ENCODE measurements at regions of chr12 and their contacts with region 1.

Region 1: GRCh38 chr12:51823875-51824565 is 24.5 kb downstream of the FIGNL2 start:
- DNase-seq: no peak
- ATAC-seq: peak; percentile 72
- H3K4me3 ChIP-seq: no peak overlapping the region
- H3K27ac ChIP-seq: no peak overlapping the region
- H3K4me1 ChIP-seq: no peaks in the 10 kb centered on the region
- H3K27me3 ChIP-seq: no peaks in the 10 kb centered on the region
- CTCF ChIP-seq: peak; percentile 86

Region 2: GRCh38 chr12:51424662-51425438 is 399.2 kb before region 1 on chr12 and contains the start of gene SLC4A8:
- CTCF ChIA-PET with region 1: interaction called, 9 read pairs
- POLR2A ChIA-PET with region 1: no interaction called
- in situ Hi-C with region 1: no loop called
- intact Hi-C with region 1: loop called (anchors 2 kb)
- DNase-seq: no peak
- ATAC-seq: peak; percentile 98
- H3K4me3 ChIP-seq: peak within 1 kb of the TSS; percentile 60 to 70
- H3K27ac ChIP-seq: peak within 1 kb of the TSS; percentile 80
- H3K4me1 ChIP-seq: peaks cover 6% of the 10 kb centered on the region; the same call in 1 of the 2 replicates
- H3K27me3 ChIP-seq: no peaks in the 10 kb centered on the region
- CTCF ChIP-seq: peak; percentile 92
- total RNA-seq, gene SLC4A8: 18.8 TPM

Region 3: GRCh38 chr12:51531978-51532497 is 292.0 kb before region 1 on chr12:
- CTCF ChIA-PET with region 1: interaction called, 9 read pairs
- POLR2A ChIA-PET with region 1: no interaction called
- in situ Hi-C with region 1: no loop called
- intact Hi-C with region 1: loop called (anchors 10 kb)
- DNase-seq: peak; percentile 73
- ATAC-seq: peak; percentile 95
- H3K4me3 ChIP-seq: no peak overlapping the region
- H3K27ac ChIP-seq: no peak overlapping the region
- H3K4me1 ChIP-seq: peaks cover 6% of the 10 kb centered on the region
- H3K27me3 ChIP-seq: peaks cover 2% of the 10 kb centered on the region; the same call in 1 of the 2 replicates
- CTCF ChIP-seq: peak; percentile 95

Region 4: GRCh38 chr12:51773145-51773867 is 50.7 kb before region 1 on chr12:
- CTCF ChIA-PET with region 1: no interaction called
- POLR2A ChIA-PET with region 1: no interaction called
- in situ Hi-C with region 1: no loop called
- intact Hi-C with region 1: no loop called
- DNase-seq: no peak
- ATAC-seq: no peak
- H3K4me3 ChIP-seq: no peak overlapping the region
- H3K27ac ChIP-seq: no peak overlapping the region
- H3K4me1 ChIP-seq: no peaks in the 10 kb centered on the region
- H3K27me3 ChIP-seq: no peaks in the 10 kb centered on the region
- CTCF ChIP-seq: no peak

Region 5: DNA sequence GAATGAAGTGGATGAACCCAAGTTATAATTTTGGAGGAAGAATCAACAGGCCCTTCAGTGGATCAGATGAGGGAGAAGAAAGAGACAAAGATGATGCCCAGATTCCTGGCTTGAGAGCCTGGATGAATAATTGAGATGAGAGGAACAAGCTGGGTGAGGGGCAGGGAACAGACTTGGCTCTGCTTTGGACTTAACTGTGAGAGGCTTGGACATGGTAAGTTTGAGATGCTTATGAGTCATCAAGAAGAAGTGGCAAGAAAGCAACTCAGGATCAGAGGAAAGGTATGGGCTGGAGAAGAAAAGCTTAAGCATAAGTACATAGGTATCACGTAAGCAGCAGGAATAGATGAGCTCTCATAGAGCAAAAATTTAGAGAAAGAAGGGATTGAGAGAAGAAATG is 30.8 kb before region 1 on chr12:
- CTCF ChIA-PET with region 1: no interaction called
- POLR2A ChIA-PET with region 1: no interaction called
- in situ Hi-C with region 1: no loop called
- intact Hi-C with region 1: no loop called
- DNase-seq: no peak
- ATAC-seq: no peak
- H3K4me3 ChIP-seq: no peak overlapping the region
- H3K27ac ChIP-seq: no peak overlapping the region
- H3K4me1 ChIP-seq: no peaks in the 10 kb centered on the region
- H3K27me3 ChIP-seq: no peaks in the 10 kb centered on the region
- CTCF ChIP-seq: no peak

Region 6: GRCh38 chr12:51874486-51874885 is 50.5 kb after region 1 on chr12:
- CTCF ChIA-PET with region 1: interaction called, 11 read pairs
- POLR2A ChIA-PET with region 1: no interaction called
- in situ Hi-C with region 1: no loop called
- intact Hi-C with region 1: no loop called
- DNase-seq: no peak
- ATAC-seq: no peak
- H3K4me3 ChIP-seq: no peak overlapping the region
- H3K27ac ChIP-seq: no peak overlapping the region
- H3K4me1 ChIP-seq: no peaks in the 10 kb centered on the region
- H3K27me3 ChIP-seq: no peaks in the 10 kb centered on the region
- CTCF ChIP-seq: no peak

Region 7: DNA sequence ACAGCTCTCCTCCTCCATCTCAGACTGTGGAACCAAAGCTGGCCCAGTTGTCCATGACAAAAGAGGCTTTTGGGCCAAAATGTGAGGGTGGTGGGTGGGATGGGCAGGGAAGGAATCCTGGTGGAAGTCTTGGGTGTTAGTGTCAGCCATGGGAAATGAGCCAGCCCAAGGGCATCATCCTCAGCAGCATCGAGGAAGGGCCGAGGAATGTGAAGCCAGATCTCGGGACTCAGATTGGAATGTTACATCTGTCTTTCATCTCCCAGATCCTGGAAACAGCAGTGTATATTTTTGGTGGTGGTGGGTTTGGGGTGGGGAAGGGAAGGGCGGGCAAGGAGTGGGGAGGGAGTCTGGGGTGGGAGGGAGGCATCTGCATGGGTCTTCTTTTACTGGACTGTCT is 170.9 kb after region 1 on chr12:
- CTCF ChIA-PET with region 1: no interaction called
- POLR2A ChIA-PET with region 1: interaction called, 11 read pairs
- in situ Hi-C with region 1: no loop called
- intact Hi-C with region 1: no loop called
- DNase-seq: no peak
- ATAC-seq: no peak
- H3K4me3 ChIP-seq: no peak overlapping the region
- H3K27ac ChIP-seq: no peak overlapping the region
- H3K4me1 ChIP-seq: no peaks in the 10 kb centered on the region
- H3K27me3 ChIP-seq: no peaks in the 10 kb centered on the region
- CTCF ChIP-seq: no peak

Region 8: GRCh38 chr12:52006726-52007157 is 182.7 kb after region 1 on chr12 and contains the start of gene TAMALIN:
- CTCF ChIA-PET with region 1: no interaction called
- POLR2A ChIA-PET with region 1: no interaction called
- in situ Hi-C with region 1: no loop called
- intact Hi-C with region 1: no loop called
- DNase-seq: no peak
- ATAC-seq: peak; percentile 60
- H3K4me3 ChIP-seq: peak within 1 kb of the TSS; percentile 36 to 41
- H3K27ac ChIP-seq: no peak within 1 kb of the TSS
- H3K4me1 ChIP-seq: no peaks in the 10 kb centered on the region
- H3K27me3 ChIP-seq: peaks cover 4% of the 10 kb centered on the region; the same call in 1 of the 2 replicates
- CTCF ChIP-seq: no peak
- total RNA-seq, gene TAMALIN: 0.82 TPM

Region 9: DNA sequence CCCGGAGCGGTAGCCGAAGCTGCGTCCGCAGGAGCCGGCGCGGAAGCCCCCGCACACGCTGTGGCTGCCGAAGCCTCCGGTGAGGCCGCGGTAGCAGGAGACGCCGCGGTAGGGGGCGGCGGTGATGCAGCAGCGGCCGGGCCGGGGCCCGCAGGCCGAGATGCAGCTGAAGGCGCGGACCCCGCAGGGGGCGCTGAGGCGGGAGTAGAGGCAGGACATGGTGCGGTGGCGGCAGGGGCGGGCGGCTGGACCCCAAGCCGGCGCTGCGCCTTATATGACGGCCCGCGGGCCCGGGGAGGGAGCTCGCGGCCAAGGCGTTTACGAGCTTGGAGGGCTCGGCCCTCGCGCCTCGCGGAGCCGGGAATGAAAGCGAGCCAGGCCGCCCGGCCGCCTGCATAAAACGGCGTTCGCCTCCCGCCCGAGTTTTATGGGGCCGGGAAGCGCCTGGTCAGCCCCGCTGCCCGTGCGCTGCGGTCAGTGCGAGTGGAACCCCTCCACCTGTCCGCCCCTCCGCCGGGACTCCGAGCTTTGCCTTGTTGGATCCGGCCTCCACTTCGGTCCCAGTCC is 434.4 kb after region 1 on chr12:
- CTCF ChIA-PET with region 1: no interaction called
- POLR2A ChIA-PET with region 1: no interaction called
- in situ Hi-C with region 1: no loop called
- intact Hi-C with region 1: no loop called
- DNase-seq: no peak
- ATAC-seq: no peak
- H3K4me3 ChIP-seq: no peak overlapping the region
- H3K27ac ChIP-seq: no peak overlapping the region
- H3K4me1 ChIP-seq: no peaks in the 10 kb centered on the region
- H3K27me3 ChIP-seq: no peaks in the 10 kb centered on the region
- CTCF ChIP-seq: no peak